GM12878 (cell line): ENCODE measurements at regions of chr10 and their contacts with region 1.

Region 1: GRCh38 chr10:28381903-28382347 is 79.1 kb upstream of the MPP7 start:
- DNase-seq: peak; percentile 40
- ATAC-seq: peak; percentile 97
- H3K4me3 ChIP-seq: no peak overlapping the region
- H3K27ac ChIP-seq: no peak overlapping the region
- H3K4me1 ChIP-seq: no peaks in the 10 kb centered on the region
- H3K27me3 ChIP-seq: no peaks in the 10 kb centered on the region
- CTCF ChIP-seq: peak; percentile 87 to 95 (median 89)
- EP300 ChIP-seq: no peak
- POLR2A ChIP-seq: no peak
- RAD21 ChIP-seq: peak; percentile 98

Region 2: GRCh38 chr10:27742195-27743011 is 639.5 kb before region 1 on chr10:
- CTCF ChIA-PET with region 1: no interaction called
- POLR2A ChIA-PET with region 1: no interaction called
- RAD21 ChIA-PET with region 1: no interaction called
- SMC1A ChIA-PET with region 1: no interaction called
- in situ Hi-C with region 1: loop called (anchors 25 kb)
- intact Hi-C with region 1: loop called (anchors 2 kb)
- DNase-seq: peak; percentile 38
- ATAC-seq: peak; percentile 99
- H3K4me3 ChIP-seq: no peak overlapping the region
- H3K27ac ChIP-seq: no peak overlapping the region
- H3K4me1 ChIP-seq: no peaks in the 10 kb centered on the region
- H3K27me3 ChIP-seq: peaks cover 12 to 50% of the 10 kb centered on the region in 2 experiments
- CTCF ChIP-seq: peak; percentile 58 to 69 (median 67); a peak in 5 of 6 replicates
- EP300 ChIP-seq: no peak; a peak in 1 of 4 replicates
- POLR2A ChIP-seq: no peak; the same call in 1 of the 2 replicates
- RAD21 ChIP-seq: peak; percentile 59

Region 3: GRCh38 chr10:28179006-28179742 is 202.8 kb before region 1 on chr10:
- CTCF ChIA-PET with region 1: interaction called, 4 read pairs
- POLR2A ChIA-PET with region 1: no interaction called
- RAD21 ChIA-PET with region 1: interaction called, 3 read pairs
- SMC1A ChIA-PET with region 1: interaction called, 11 read pairs
- in situ Hi-C with region 1: no loop called
- intact Hi-C with region 1: loop called (anchors 2 kb)
- DNase-seq: no peak
- ATAC-seq: peak; percentile 83
- H3K4me3 ChIP-seq: no peak overlapping the region
- H3K27ac ChIP-seq: no peak overlapping the region
- H3K4me1 ChIP-seq: no peaks in the 10 kb centered on the region
- H3K27me3 ChIP-seq: no peaks in the 10 kb centered on the region
- CTCF ChIP-seq: peak; percentile 55 to 64 (median 58)
- EP300 ChIP-seq: no peak
- POLR2A ChIP-seq: no peak
- RAD21 ChIP-seq: peak; percentile 75

Region 4: GRCh38 chr10:28202941-28203352 is 179.0 kb before region 1 on chr10:
- CTCF ChIA-PET with region 1: no interaction called
- POLR2A ChIA-PET with region 1: no interaction called
- RAD21 ChIA-PET with region 1: no interaction called
- SMC1A ChIA-PET with region 1: no interaction called
- in situ Hi-C with region 1: no loop called
- intact Hi-C with region 1: no loop called
- DNase-seq: no peak
- ATAC-seq: no peak
- H3K4me3 ChIP-seq: no peak overlapping the region
- H3K27ac ChIP-seq: no peak overlapping the region
- H3K4me1 ChIP-seq: no peaks in the 10 kb centered on the region
- H3K27me3 ChIP-seq: no peaks in the 10 kb centered on the region
- CTCF ChIP-seq: no peak
- EP300 ChIP-seq: no peak
- POLR2A ChIP-seq: no peak
- RAD21 ChIP-seq: no peak

Region 5: GRCh38 chr10:28250782-28251181 is 131.1 kb before region 1 on chr10:
- CTCF ChIA-PET with region 1: interaction called, 77 read pairs
- POLR2A ChIA-PET with region 1: no interaction called
- RAD21 ChIA-PET with region 1: interaction called, 39 read pairs
- SMC1A ChIA-PET with region 1: interaction called, 39 read pairs
- in situ Hi-C with region 1: loop called (anchors 5 kb)
- intact Hi-C with region 1: loop called (anchors 1 kb)
- DNase-seq: no peak
- ATAC-seq: peak; percentile 32; the same call in 1 of the 3 replicates
- H3K4me3 ChIP-seq: no peak overlapping the region
- H3K27ac ChIP-seq: no peak overlapping the region
- H3K4me1 ChIP-seq: no peaks in the 10 kb centered on the region
- H3K27me3 ChIP-seq: no peaks in the 10 kb centered on the region; a peak in 1 of 4 replicates
- CTCF ChIP-seq: peak in 2 of 3 experiments; percentile 43 to 52; a peak in 3 of 6 replicates
- EP300 ChIP-seq: no peak
- POLR2A ChIP-seq: no peak
- RAD21 ChIP-seq: peak; percentile 60

Region 6: DNA sequence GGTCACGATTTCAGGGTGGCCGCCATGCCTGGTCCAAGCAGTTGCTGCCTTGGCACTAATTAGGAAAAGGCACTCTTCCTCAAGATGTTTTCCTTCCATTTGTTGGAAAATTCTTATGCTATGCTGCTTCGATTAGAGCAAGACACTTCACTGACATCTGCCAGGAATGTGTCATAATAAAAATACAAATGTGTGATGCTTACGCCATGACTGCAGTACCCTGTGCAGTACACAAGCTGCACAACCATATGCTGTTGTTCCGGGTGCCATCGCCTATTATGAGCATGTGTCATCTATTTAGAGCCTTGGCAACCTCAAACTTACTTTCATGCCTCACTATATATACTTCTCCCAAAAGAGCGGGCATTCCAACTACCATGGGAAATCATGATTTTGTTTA is 64.2 kb before region 1 on chr10:
- CTCF ChIA-PET with region 1: interaction called, 4 read pairs
- POLR2A ChIA-PET with region 1: no interaction called
- RAD21 ChIA-PET with region 1: interaction called, 3 read pairs
- SMC1A ChIA-PET with region 1: no interaction called
- in situ Hi-C with region 1: no loop called
- intact Hi-C with region 1: loop called (anchors 5 kb)
- DNase-seq: no peak
- ATAC-seq: no peak
- H3K4me3 ChIP-seq: no peak overlapping the region
- H3K27ac ChIP-seq: no peak overlapping the region
- H3K4me1 ChIP-seq: no peaks in the 10 kb centered on the region
- H3K27me3 ChIP-seq: no peaks in the 10 kb centered on the region; a peak in 1 of 4 replicates
- CTCF ChIP-seq: no peak
- EP300 ChIP-seq: no peak
- POLR2A ChIP-seq: no peak
- RAD21 ChIP-seq: no peak

Region 7: DNA sequence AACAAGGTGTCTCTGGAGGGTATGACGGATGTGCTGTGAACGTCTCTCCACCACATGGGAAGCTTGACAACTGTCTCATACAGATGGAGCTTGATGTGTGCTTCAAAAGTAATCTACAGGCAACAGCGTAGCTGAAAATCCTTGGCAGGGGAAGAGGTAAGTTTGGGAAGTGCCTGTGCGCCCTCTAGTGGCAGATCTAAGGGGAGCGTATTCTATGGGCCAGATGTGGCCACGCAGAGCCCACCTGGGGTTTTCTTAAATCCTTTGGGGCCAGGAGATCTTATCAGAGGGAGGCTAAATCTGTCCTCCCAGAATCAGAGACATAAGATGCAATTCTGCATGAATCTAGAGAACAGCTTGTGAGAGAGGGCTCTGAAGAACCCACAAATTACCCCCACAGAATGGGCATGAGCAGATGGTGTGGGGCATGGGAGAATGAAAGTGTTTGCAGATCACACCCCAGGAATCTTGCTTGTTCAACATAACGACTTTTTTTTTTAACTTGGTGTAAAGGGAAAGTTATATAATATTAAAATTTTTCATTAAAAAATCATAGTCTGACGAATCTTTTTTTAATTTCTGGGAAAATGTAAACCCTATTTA is 12.1 kb after region 1 on chr10:
- CTCF ChIA-PET with region 1: interaction called, 48 read pairs
- POLR2A ChIA-PET with region 1: no interaction called
- RAD21 ChIA-PET with region 1: no interaction called
- SMC1A ChIA-PET with region 1: interaction called, 8 read pairs
- in situ Hi-C with region 1: no loop called
- intact Hi-C with region 1: no loop called
- DNase-seq: no peak
- ATAC-seq: peak; percentile 94
- H3K4me3 ChIP-seq: no peak overlapping the region
- H3K27ac ChIP-seq: no peak overlapping the region
- H3K4me1 ChIP-seq: no peaks in the 10 kb centered on the region
- H3K27me3 ChIP-seq: no peaks in the 10 kb centered on the region
- CTCF ChIP-seq: peak; percentile 75 to 92 (median 92)
- EP300 ChIP-seq: no peak
- POLR2A ChIP-seq: no peak
- RAD21 ChIP-seq: peak; percentile 52